Gastrocnemius medialis (tissue), 4 donors: ENCODE measurements at regions of chr10 and their contacts with region 1.

Region 1: DNA sequence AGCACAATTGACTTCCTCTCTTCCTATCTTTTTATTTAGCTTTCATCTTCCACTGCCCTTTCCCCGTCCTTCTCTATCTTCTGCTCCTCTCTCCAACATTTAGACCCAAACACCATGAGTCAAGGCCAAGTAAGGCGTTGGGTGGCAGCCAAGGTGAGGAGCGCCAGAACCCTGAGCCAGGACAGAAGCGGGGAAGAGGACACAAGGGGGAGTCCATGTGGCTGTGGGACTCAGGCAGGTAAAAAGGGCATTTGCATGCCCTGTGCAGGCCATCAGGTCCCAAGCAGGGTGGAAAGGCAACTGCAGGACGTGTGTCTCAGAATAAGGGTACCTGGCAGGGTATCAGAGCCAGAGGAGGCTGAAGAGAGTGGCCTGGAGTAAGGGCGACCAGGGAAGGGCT is 192.4 kb upstream of the PFKP start:
- DNase-seq: no peak
- ATAC-seq: no peak
- H3K4me3 ChIP-seq: no peak overlapping the region
- H3K27ac ChIP-seq: no peak overlapping the region
- H3K4me1 ChIP-seq: no peaks in the 10 kb centered on the region
- H3K27me3 ChIP-seq: no peaks in the 10 kb centered on the region
- CTCF ChIP-seq: no peak
- POLR2A ChIP-seq: no peak

Region 2: GRCh38 chr10:1685699-1686412 is 1189.1 kb before region 1 on chr10:
- in situ Hi-C with region 1: no loop called
- intact Hi-C with region 1: no loop called
- DNase-seq: no peak
- ATAC-seq: no peak
- H3K4me3 ChIP-seq: no peak overlapping the region
- H3K27ac ChIP-seq: no peak overlapping the region
- H3K4me1 ChIP-seq: no peaks in the 10 kb centered on the region
- H3K27me3 ChIP-seq: no peaks in the 10 kb centered on the region
- CTCF ChIP-seq: no peak
- POLR2A ChIP-seq: no peak

Region 3: GRCh38 chr10:2628705-2629104 is 246.3 kb before region 1 on chr10:
- in situ Hi-C with region 1: no loop called
- intact Hi-C with region 1: loop called (anchors 5 kb)
- DNase-seq: no peak
- ATAC-seq: no peak
- H3K4me3 ChIP-seq: no peak overlapping the region
- H3K27ac ChIP-seq: no peak overlapping the region
- H3K4me1 ChIP-seq: no peaks in the 10 kb centered on the region
- H3K27me3 ChIP-seq: no peaks in the 10 kb centered on the region
- CTCF ChIP-seq: no peak
- POLR2A ChIP-seq: no peak